ENCODE measurements at regions of chr17 and their contacts with region 1.

Region 1: DNA sequence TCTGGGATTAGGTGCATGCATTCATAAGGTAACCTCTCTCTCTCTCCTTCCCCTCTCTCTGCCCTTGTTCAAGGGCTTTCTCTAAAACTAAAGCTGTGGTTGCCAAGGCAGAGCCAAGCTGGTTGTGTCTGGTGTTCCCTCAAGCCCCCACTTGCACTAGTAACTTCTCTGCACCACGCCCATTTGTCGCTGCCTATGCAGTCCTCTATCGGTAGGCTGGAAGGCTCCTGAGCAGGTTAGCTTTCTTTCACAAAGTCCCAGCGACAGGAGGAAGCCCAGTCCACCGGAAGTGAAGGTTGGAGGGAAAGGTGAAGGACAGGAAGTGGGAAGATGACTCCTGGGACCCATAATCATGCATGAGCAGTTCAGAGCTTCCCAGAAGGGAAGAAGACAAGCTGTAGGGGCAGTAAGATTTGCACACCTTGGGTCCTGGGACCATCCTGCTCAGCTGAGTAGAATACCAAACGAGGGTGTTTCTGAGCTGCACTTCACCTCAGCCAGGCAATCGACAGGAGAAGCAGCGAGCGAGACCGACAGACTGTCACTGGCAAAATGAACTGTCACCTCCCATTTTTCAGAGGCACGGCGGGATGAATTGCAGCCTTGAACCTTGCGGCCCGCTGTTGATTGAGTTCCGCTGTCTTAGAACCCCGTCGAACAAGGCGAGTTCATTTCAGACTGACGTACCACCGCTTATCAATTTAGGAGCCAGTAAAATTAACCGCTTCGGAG is 14.7 kb upstream of the SKAP1 start:
- DNase-seq: peak in 2 of 3 donors; percentile 43 to 53
- H3K4me3 ChIP-seq: no peak overlapping the region
- H3K27ac ChIP-seq: no peak overlapping the region
- H3K4me1 ChIP-seq: peaks cover 16 to 47% (median 32%) of the 10 kb centered on the region in 4 experiments
- H3K27me3 ChIP-seq: no peaks in the 10 kb centered on the region

Region 2: GRCh38 chr17:48432820-48433775 is 11.6 kb before region 1 on chr17:
- CTCF ChIA-PET with region 1: interaction called, 13 read pairs
- POLR2A ChIA-PET with region 1: no interaction called
- DNase-seq: peak in 1 of 3 donors; percentile 16
- H3K4me3 ChIP-seq: no peak overlapping the region
- H3K27ac ChIP-seq: no peak overlapping the region
- H3K4me1 ChIP-seq: peaks cover 8 to 29% (median 15%) of the 10 kb centered on the region in 4 experiments
- H3K27me3 ChIP-seq: peaks cover 0 to 5% (median 0%) of the 10 kb centered on the region in 5 experiments

Region 3: DNA sequence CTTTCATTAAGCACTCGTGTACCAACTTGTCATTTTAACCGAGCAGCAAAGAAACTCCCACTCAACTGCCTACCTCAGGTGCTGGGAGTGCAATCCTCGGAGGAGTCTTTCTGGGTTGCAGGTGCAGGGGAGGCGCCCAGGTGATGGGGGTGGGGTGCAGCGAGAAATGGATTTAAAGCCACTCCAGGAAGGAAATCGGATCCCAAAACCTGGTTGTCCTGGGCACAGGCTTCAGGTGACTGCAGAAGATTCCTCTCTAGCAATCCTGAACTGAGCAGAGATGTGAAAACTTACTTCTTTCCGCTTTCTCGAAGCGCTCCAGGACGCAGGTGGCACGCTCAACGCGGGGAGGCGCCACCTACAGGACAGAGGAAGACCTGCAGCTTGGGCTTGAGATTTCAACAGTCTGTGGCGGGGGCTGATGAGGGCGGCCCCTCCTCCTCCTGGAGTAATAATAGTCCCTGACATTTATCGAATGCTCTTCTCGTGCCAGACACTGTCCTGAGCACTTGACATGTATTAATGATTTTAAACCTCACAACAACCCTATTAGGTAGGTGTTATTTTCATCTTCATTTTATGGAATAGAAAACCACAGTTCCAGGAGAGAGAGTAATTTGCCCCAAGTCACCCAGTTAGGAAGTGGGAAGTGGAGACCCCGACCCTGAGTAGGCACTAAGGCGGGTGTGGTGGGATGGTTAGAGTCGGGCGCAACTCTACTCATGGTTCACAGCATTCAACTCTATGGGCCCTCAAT is 12.6 kb after region 1 on chr17:
- CTCF ChIA-PET with region 1: interaction called, 10 read pairs
- POLR2A ChIA-PET with region 1: no interaction called
- DNase-seq: peak; percentile 80 to 89 (median 87)
- H3K4me3 ChIP-seq: no peak overlapping the region
- H3K27ac ChIP-seq: no peak overlapping the region
- H3K4me1 ChIP-seq: peaks cover 9 to 35% (median 18%) of the 10 kb centered on the region in 4 experiments
- H3K27me3 ChIP-seq: no peaks in the 10 kb centered on the region